PC-9 (cell line): ENCODE measurements at regions of chr2 and their contacts with region 1.

Region 1: DNA sequence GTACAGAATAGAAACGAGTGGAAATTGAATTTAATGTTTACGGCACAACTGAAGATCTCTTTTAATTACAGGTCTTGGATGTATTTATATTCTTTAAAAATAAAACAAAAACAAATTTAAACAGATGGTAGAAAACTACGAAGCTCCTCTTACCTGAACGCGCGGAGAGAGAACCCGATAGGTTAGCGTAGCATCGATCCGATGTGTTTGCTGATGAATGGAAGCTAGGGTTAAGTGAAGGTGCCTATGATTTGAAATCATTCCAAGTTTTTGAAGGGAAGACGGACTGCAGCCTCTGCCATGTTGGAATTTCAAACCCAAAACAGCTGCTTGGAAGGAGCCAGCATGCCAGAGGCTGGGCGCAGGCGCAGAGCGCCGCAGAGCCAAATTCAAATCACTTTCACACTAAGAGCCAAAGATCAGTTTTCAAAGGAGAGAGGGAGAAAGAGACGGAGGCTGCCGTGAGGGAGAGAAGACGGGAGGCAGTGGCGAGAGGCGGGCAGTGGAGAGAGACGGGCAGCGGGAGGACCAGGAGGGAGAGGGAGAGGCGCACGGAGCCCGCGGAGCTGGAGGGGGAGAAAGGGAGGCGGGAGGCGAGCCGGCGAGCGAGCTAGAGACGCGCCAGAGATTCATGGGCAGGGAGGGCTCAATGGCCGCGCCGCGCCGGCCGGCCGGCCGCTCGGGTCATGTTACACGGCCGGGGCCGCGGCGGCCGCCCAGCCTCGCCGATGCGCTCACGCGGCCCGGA is at the start of gene FIGN:
- DNase-seq: peak; percentile 57 to 61
- H3K4me3 ChIP-seq: peak within 1 kb of the TSS; percentile 91
- H3K27ac ChIP-seq: peak within 1 kb of the TSS; percentile 57
- H3K4me1 ChIP-seq: no peaks in the 10 kb centered on the region
- H3K27me3 ChIP-seq: no peaks in the 10 kb centered on the region
- CTCF ChIP-seq: no peak
- total RNA-seq, gene FIGN: 3.1 and 7.4 TPM in 2 replicates

Region 2: GRCh38 chr2:163626639-163627109 is 109.2 kb before region 1 on chr2:
- CTCF ChIA-PET with region 1: no interaction called
- POLR2A ChIA-PET with region 1: no interaction called
- intact Hi-C with region 1: loop called (anchors 5 kb)
- DNase-seq: peak; percentile 41 to 71
- H3K4me3 ChIP-seq: no peak overlapping the region
- H3K27ac ChIP-seq: peak overlapping the region; percentile 67
- H3K4me1 ChIP-seq: peaks cover 20% of the 10 kb centered on the region
- H3K27me3 ChIP-seq: no peaks in the 10 kb centered on the region
- CTCF ChIP-seq: no peak

Region 3: GRCh38 chr2:163852616-163853015 is 116.8 kb after region 1 on chr2:
- CTCF ChIA-PET with region 1: no interaction called
- POLR2A ChIA-PET with region 1: no interaction called
- intact Hi-C with region 1: loop called (anchors 5 kb)
- DNase-seq: peak in 1 of 2 experiments; percentile 38
- H3K4me3 ChIP-seq: no peak overlapping the region
- H3K27ac ChIP-seq: no peak overlapping the region
- H3K4me1 ChIP-seq: no peaks in the 10 kb centered on the region
- H3K27me3 ChIP-seq: no peaks in the 10 kb centered on the region
- CTCF ChIP-seq: no peak

Region 4: DNA sequence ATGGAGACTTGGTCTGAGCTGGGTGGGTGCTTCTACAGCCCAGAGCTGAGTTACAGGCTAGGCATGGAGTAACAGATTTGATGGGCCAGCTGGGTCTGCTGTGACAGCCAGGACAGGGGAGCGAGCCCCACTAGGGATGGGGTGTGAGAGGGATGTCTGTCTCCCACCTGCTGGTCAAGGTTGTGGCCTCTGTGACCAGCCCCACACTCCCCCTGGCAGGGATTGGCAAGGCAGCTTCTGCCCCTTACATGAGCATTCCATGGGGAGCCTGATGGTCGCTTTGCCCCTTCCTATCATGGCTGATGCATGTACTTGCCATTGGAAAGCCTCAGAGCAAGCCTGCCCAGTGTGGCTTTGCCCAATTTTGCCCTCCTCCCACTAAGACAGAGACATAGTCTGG is 161.9 kb after region 1 on chr2:
- CTCF ChIA-PET with region 1: no interaction called
- POLR2A ChIA-PET with region 1: no interaction called
- intact Hi-C with region 1: no loop called
- DNase-seq: no peak
- H3K4me3 ChIP-seq: no peak overlapping the region
- H3K27ac ChIP-seq: no peak overlapping the region
- H3K4me1 ChIP-seq: no peaks in the 10 kb centered on the region
- H3K27me3 ChIP-seq: no peaks in the 10 kb centered on the region
- CTCF ChIP-seq: no peak

Region 5: GRCh38 chr2:164420786-164421185 is 684.9 kb after region 1 on chr2:
- CTCF ChIA-PET with region 1: no interaction called
- POLR2A ChIA-PET with region 1: no interaction called
- intact Hi-C with region 1: loop called (anchors 10 kb)
- DNase-seq: no peak
- H3K4me3 ChIP-seq: no peak overlapping the region
- H3K27ac ChIP-seq: no peak overlapping the region
- H3K4me1 ChIP-seq: no peaks in the 10 kb centered on the region
- H3K27me3 ChIP-seq: no peaks in the 10 kb centered on the region
- CTCF ChIP-seq: no peak